PC-9 (cell line): ENCODE measurements at regions of chr3 and their contacts with region 1.

Region 1: DNA sequence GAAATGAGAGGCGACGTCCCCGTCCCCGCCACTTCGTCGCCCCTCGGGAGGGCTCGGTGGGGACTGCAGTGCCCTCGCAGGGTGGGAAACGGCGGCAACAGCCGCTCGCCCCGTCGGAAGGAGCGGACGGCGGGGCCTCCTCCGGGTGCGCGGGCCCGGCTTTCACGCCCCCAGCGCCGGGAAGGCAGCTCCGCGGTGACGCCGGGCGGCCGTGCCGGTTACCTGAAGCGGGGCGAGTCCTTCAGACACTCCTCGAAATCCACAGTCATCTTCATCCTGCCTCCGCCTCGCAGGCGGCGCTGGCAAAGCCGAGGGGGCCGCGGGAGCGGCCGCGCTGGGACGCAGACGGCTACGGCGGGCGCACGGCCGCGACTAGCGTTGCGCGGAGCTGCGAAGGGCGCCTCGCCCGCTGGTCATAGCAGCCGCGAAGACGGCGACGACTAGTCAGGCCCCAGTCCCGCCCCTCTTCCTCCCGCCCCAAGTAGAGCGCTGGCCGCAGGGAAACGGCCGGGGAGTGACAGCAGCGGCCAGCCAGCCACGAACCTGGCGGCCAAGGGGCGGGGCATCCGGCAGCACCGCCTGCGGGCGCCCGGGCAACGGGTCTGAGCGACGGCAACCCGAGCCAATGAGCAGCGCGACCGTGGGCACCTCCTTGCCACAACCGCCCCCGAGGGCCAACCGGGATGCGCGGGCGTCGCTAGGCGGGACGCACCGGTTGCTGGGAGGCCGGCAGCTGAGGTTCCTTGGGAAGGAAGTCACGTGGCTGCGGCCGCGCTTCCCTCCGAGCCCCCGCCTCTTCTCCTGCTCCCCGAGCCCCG is at the start of gene ACAP2:
- DNase-seq: peak; percentile 99 to 100
- H3K4me3 ChIP-seq: peak within 1 kb of the TSS; percentile 73
- H3K27ac ChIP-seq: peak within 1 kb of the TSS; percentile 62
- H3K4me1 ChIP-seq: peaks cover 44% of the 10 kb centered on the region
- H3K27me3 ChIP-seq: no peaks in the 10 kb centered on the region
- CTCF ChIP-seq: no peak
- total RNA-seq, gene ACAP2: 67.9 and 71.0 TPM in 2 replicates

Region 2: DNA sequence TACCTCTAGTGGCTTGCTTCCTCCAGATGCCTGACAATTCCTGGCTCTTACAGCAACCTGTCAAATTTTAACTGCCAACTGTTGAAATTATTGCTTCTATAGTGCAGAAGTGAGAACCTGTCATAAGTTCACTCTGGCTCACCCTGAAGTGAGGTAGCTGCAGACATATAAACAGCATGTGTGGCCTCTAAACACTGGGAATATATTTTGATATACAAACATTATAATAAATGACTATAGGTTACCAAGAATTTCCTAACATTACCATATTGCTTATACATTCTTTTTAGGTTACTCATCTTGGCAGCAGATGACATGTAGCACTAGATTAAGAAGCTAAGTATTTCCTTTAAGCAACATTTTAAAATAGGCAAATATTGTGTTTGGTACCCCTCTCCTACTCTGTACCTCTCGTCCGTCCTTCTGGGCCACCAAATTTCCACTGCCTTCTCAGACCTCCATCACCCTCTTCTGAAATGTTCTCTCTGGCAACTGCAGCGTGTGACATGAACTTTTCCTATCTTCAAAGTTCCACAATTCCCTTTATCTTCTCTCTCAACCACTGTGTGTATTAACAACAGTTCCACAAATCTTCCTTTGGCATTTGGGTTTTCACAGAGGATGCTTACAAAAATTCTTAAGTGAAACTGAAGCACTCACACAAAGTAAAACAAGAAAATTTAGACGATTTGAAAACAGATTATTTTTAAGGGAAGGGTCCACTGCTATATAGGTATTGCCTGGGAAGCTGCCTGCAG is 156.5 kb before region 1 on chr3:
- CTCF ChIA-PET with region 1: no interaction called
- POLR2A ChIA-PET with region 1: no interaction called
- intact Hi-C with region 1: no loop called
- DNase-seq: peak in 1 of 2 experiments; percentile 62
- H3K4me3 ChIP-seq: no peak overlapping the region
- H3K27ac ChIP-seq: peak overlapping the region; percentile 21
- H3K4me1 ChIP-seq: no peaks in the 10 kb centered on the region; the same call in 1 of the 2 replicates
- H3K27me3 ChIP-seq: no peaks in the 10 kb centered on the region
- CTCF ChIP-seq: no peak

Region 3: GRCh38 chr3:195352895-195353488 is 89.8 kb before region 1 on chr3:
- CTCF ChIA-PET with region 1: no interaction called
- POLR2A ChIA-PET with region 1: interaction called, 16 read pairs
- intact Hi-C with region 1: no loop called
- DNase-seq: peak; percentile 51 to 65
- H3K4me3 ChIP-seq: no peak overlapping the region
- H3K27ac ChIP-seq: peak overlapping the region; percentile 82
- H3K4me1 ChIP-seq: peaks cover 12% of the 10 kb centered on the region
- H3K27me3 ChIP-seq: no peaks in the 10 kb centered on the region
- CTCF ChIP-seq: no peak

Region 4: DNA sequence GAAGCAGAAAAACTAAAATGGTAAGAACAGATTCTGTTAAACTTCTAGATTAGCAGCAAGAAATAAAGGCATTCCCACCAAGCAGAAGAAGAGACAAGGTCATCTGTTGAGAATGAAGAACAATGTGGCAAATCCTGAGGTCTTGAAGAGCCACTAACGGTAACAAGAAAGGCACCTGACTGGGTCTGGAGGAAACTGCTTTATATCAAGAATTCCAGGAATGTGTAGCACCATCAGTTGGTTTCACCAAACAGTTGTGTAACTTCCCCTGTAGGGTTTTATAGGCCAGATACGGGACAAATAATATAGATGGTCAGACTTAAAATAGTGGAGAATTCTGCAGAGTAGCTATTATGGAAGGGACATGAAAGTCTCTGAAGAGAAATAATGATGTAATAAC is 57.3 kb before region 1 on chr3:
- CTCF ChIA-PET with region 1: no interaction called
- POLR2A ChIA-PET with region 1: no interaction called
- intact Hi-C with region 1: loop called (anchors 5 kb)
- DNase-seq: peak; percentile 10 to 77
- H3K4me3 ChIP-seq: no peak overlapping the region
- H3K27ac ChIP-seq: 0 out of 2 replicates have a peak overlapping the region, but pooled peaks have one; percentile 1
- H3K4me1 ChIP-seq: peaks cover 35% of the 10 kb centered on the region
- H3K27me3 ChIP-seq: no peaks in the 10 kb centered on the region
- CTCF ChIP-seq: no peak